Naive thymus-derived CD8-positive, alpha-beta T cell (primary cell): ENCODE measurements at regions of chr12 and their contacts with region 1.

Region 1: GRCh38 chr12:50111693-50112455 is at the start of gene COX14:
- DNase-seq: peak; percentile 96 to 100 (median 99)
- ATAC-seq: peak; percentile 86 to 88
- H3K4me3 Mint-ChIP-seq: peak within 1 kb of the TSS; percentile 94 to 99 (median 98)
- H3K27ac Mint-ChIP-seq: peak within 1 kb of the TSS; percentile 94 to 99 (median 98)
- H3K4me1 Mint-ChIP-seq: peaks cover 11 to 55% (median 39%) of the 10 kb centered on the region in 4 donors
- H3K27me3 Mint-ChIP-seq: no peaks in the 10 kb centered on the region
- polyA plus RNA-seq, gene COX14: 266 to 317 (median 298) TPM

Region 2: GRCh38 chr12:50057000-50057841 is 54.7 kb before region 1 on chr12 and contains the start of gene ASIC1:
- POLR2A ChIA-PET with region 1: interaction called, 19 read pairs
- DNase-seq: peak in 9 of 10 donors; percentile 22 to 78 (median 38)
- ATAC-seq: peak; percentile 48 to 57
- H3K4me3 Mint-ChIP-seq: peak within 1 kb of the TSS; percentile 83 to 98 (median 92)
- H3K27ac Mint-ChIP-seq: peak within 1 kb of the TSS; percentile 63 to 96 (median 90)
- H3K4me1 Mint-ChIP-seq: peaks cover 43 to 59% (median 51%) of the 10 kb centered on the region in 4 donors
- H3K27me3 Mint-ChIP-seq: peaks cover 8 to 27% (median 26%) of the 10 kb centered on the region in 5 donors
- polyA plus RNA-seq, gene ASIC1: 0.97 to 1.3 (median 1.0) TPM

Region 3: DNA sequence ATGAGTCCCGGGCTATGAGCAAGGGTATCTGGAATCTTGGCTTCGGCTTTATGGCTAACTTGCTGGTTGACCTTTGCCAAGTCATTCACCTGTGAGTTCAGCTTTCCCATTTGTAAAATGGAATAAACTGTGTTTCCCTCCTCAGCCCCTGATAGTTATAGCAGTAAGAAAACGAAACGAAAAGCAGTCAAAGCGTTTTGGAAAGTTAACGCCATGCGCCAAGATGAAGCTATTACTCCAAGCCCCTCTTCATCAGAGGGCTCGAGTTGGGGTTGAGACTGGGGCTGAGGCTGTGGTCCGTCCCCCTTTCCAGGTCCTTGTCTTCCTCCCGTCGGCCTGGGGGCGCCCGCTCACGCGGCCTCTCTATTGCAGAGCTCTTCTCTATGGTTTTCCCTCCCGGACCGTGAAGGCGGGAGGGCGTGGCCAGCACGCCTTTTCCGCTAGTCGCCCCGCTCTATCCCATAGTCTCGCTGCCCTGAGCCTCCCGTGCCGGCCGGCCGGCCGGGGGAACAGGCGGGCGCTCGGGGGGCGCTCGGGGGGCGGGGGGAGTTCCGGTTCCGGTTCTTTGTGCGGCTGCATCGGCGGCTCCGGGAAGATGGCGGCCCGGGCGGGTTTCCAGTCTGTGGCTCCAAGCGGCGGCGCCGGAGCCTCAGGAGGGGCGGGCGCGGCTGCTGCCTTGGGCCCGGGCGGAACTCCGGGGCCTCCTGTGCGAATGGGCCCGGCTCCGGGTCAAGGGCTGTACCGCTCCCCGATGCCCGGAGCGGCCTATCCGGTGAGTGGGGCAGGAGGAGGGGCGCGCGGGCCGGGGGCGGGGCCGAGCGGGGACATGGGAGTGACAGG is 26.9 kb before region 1 on chr12 and contains the start of gene SMARCD1:
- POLR2A ChIA-PET with region 1: interaction called, 61 read pairs
- DNase-seq: peak; percentile 66 to 91 (median 80)
- ATAC-seq: peak; percentile 89 to 91
- H3K4me3 Mint-ChIP-seq: peak within 1 kb of the TSS; percentile 90 to 99 (median 94)
- H3K27ac Mint-ChIP-seq: peak within 1 kb of the TSS; percentile 95 to 99 (median 97)
- H3K4me1 Mint-ChIP-seq: peaks cover 21 to 43% (median 38%) of the 10 kb centered on the region in 4 donors
- H3K27me3 Mint-ChIP-seq: no peaks in the 10 kb centered on the region
- polyA plus RNA-seq, gene SMARCD1: 9.7 to 16.8 (median 16.0) TPM

Region 4: DNA sequence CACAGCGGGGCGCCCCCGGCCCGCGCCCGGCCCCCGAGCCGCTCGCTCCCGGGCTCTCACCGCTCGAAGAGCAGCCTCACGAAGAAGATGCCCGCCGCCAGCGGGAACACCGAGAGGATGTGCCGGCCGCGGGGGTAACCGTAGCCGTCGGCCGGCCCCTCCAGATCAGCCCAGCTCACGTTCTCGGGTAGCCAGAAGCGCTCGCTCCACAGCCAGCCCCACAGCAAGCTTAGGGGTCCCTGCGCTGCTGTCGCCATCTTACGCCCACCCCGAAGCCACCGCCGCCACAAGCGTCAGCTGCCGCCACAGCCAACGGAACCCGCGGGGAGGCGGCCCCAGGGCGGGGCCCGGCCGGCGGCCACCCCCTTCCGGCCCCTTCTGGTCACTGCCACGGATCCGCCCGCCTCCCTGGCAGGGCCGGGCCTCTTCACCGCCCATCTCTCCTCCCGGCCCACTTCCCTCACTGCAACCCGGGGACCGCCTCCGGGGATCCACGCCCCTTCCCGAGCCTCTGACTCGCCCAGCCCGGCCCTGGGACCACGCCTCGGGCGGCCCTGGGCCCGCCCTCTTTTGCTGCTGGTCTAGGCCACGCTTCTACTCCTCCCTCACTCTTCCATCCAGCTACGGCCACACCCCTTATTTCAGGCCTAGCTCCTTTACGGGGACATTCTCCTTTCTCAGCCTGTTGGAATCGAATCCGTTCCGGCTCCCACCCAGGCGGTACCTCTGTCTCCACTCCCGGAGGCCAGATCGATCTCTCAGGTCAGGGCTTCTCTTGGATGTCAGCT is 55.4 kb after region 1 on chr12 and contains the start of gene CERS5:
- POLR2A ChIA-PET with region 1: interaction called, 73 read pairs
- DNase-seq: peak; percentile 90 to 97 (median 96)
- ATAC-seq: peak; percentile 94 to 95
- H3K4me3 Mint-ChIP-seq: peak within 1 kb of the TSS; percentile 88 to 97 (median 93)
- H3K27ac Mint-ChIP-seq: peak within 1 kb of the TSS; percentile 84 to 98 (median 97)
- H3K4me1 Mint-ChIP-seq: peaks cover 8 to 41% (median 36%) of the 10 kb centered on the region in 4 donors
- H3K27me3 Mint-ChIP-seq: no peaks in the 10 kb centered on the region
- polyA plus RNA-seq, gene CERS5: 31.0 to 45.0 (median 33.6) TPM